ENCODE measurements at regions of chr5 and their contacts with region 1.

Region 1: DNA sequence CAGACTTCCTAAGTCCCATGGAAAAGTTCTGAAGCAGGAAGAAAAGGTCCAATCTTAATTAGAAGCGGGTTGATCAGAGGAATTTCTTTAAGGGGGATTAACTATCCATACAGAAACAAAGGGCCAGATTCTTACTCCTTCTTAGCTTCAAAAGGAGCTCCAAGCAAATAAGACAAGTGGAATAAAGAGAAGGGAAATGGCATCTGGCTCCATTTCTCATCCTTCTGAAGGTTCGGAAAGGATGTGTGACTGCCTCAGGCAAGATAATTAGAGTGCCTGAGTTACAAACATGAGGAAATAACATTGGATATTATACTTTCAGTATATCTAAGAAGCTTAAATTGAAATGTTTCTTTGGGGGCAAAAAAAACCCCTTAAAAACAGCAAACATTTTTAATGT is 88.1 kb upstream of the ADAMTS19 start:
- DNase-seq: no peak
- H3K4me3 Mint-ChIP-seq: no peak overlapping the region
- H3K27ac Mint-ChIP-seq: no peak overlapping the region
- H3K4me1 Mint-ChIP-seq: no peaks in the 10 kb centered on the region
- H3K27me3 Mint-ChIP-seq: peaks cover 60% of the 10 kb centered on the region
- CTCF ChIP-seq: no peak

Region 2: GRCh38 chr5:129361440-129362025 is 10.5 kb before region 1 on chr5:
- CTCF ChIA-PET with region 1: interaction called, 15 read pairs
- POLR2A ChIA-PET with region 1: interaction called, 6 read pairs
- intact Hi-C with region 1: no loop called
- DNase-seq: peak; percentile 47
- H3K4me3 Mint-ChIP-seq: no peak overlapping the region
- H3K27ac Mint-ChIP-seq: no peak overlapping the region
- H3K4me1 Mint-ChIP-seq: no peaks in the 10 kb centered on the region
- H3K27me3 Mint-ChIP-seq: peaks cover 19% of the 10 kb centered on the region
- CTCF ChIP-seq: peak; percentile 62

Measured in MCF 10A (cell line).